Kidney (tissue), 22 donors: ENCODE measurements at regions of chr10 and their contacts with region 1.

Region 1: DNA sequence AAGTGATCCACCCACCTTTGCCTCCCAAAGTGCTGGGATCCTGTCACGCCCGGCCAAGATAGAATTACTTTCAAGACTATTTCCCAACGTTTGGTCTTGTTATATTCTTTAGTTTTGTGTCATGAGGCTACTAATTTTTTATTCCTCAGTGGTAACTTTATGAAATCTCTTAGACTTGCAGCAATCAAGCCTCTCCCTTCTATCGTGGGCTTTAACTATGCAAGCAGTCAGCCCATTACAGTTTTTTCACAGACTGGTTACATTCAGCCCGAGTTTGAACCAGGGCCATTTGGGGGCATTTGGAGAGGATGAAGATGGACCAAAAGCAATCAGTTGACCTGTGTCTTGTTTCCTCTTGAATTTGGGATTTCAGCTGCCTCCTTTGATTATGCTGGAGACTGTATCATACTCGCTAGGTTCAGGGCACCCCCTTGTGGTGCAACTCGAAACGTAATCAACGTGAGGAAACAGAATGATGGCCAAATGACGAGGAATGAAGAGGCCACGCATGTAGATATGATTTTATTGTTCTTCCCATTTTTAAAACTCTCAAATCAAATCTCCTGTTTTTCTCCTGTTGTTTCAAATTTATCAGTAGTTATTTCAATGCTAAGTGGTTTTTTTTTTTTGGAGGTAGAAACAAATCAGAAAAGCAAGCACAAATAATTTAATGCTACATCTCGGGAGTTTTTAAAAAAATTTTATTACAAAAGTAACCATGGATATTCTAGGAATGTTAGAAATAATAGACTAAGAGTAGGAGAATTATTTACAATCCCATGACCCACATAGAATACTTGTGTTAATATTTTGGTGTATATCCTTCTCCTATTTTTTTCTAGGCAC is 151.6 kb downstream of the KIAA1217 start:
- DNase-seq: peak in 4 of 5 donors; percentile 63 to 89 (median 77)
- H3K4me3 ChIP-seq: no peak overlapping the region
- H3K27ac ChIP-seq: no peak overlapping the region
- H3K4me1 ChIP-seq: peaks cover 0 to 3% (median 3%) of the 10 kb centered on the region in 3 donors
- H3K27me3 ChIP-seq: no peaks in the 10 kb centered on the region
- CTCF ChIP-seq: peak; percentile 74

Region 2: DNA sequence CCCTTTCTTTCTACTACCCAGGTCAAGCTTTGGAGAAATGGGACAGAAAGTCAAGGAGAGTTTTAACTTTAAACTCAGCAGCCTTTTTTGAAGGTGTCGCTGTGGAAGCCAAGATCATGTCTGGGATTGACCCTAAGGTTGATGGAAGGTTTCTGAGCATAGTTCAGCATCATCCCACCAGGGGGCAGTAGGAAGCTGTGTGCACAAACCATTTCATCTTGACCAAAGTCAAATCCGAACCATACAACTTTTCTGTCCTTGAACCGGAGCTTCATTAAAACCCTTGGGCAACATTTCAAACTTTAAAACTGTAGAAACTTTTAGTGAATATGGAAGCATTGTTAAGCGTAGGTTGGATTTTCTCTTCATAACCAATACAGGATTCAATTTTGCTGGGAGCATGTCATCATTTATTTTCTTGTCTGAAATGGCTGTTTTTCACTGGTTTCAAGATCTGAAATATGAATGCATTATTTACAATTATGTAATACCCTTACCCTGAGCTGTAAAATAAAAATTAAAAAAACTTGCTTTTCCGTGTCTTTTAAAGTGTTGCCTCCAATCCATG is 365.9 kb before region 1 on chr10:
- intact Hi-C with region 1: loop called (anchors 10 kb)
- DNase-seq: peak in 4 of 5 donors; percentile 70 to 89 (median 82)
- H3K4me3 ChIP-seq: no peak overlapping the region
- H3K27ac ChIP-seq: no peak overlapping the region
- H3K4me1 ChIP-seq: peaks cover 0 to 2% (median 0%) of the 10 kb centered on the region in 3 donors
- H3K27me3 ChIP-seq: no peaks in the 10 kb centered on the region
- CTCF ChIP-seq: peak; percentile 89

Region 3: DNA sequence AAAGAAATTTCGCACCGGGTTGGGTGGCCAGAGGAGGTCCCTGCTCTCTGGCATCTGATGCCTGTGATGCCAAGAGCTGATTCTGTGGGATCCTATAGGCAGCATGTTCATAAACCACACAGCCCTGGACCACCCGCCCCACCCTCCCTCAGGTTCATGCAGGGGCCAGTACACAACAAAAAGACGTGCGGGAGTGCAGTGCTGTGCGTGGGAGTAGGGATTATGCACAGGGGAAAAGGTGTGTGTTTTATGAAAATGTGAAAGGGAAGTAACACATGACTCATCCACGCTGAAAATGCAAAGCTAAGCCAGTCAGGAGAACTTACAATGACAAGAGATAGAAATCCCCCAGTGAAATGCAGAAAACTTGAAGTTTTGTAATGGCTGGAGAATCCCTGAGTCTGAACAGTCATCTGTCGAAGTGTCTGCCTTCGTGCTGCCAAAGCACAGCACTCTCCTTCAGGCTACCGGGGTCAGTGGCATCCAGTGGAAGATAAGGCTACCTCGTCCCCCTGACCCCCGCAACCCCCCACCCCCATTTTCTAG is 150.5 kb before region 1 on chr10:
- intact Hi-C with region 1: loop called (anchors 10 kb)
- DNase-seq: peak; percentile 55 to 78 (median 77)
- H3K4me3 ChIP-seq: peak overlapping the region; percentile 75 to 86 (median 79)
- H3K27ac ChIP-seq: peak overlapping the region in 1 of 2 donors; percentile 93
- H3K4me1 ChIP-seq: peaks cover 8 to 25% (median 20%) of the 10 kb centered on the region in 3 donors
- H3K27me3 ChIP-seq: no peaks in the 10 kb centered on the region
- CTCF ChIP-seq: no peak

Region 4: GRCh38 chr10:25522946-25523608 is 1162.6 kb after region 1 on chr10:
- intact Hi-C with region 1: no loop called
- DNase-seq: no peak
- H3K4me3 ChIP-seq: no peak overlapping the region
- H3K27ac ChIP-seq: no peak overlapping the region
- H3K4me1 ChIP-seq: no peaks in the 10 kb centered on the region
- H3K27me3 ChIP-seq: no peaks in the 10 kb centered on the region
- CTCF ChIP-seq: peak; percentile 26